Endothelial cell of umbilical vein (primary cell): ENCODE measurements at regions of chr3 and their contacts with region 1.

Region 1: DNA sequence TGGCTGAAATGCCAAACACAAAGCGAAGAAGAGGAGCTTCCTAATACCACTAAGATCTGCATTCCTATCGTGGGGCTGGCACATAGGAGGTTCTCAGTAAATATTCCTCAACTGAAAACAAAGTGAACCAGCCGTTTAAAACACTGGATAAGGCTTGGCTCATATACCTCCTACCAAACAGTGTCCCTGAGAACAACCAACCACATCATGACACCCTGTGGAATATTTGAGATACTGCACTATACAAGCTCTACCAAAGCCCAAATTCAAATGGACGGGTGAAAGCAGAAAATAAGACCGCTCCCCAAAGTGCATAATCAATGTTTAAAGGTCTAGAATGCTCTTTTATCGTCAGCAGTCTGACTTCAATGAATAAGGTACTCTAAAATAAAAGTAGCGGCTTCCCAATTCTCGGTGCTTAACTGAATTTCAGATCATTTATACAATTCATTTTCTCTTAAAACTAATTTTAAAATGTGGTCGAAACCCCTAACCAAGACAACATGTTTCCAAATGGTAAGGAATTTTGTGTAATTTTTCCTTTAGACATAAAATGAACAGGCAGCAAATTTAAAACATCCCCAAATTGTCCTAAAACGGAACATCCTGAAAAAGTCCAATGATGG is 425.8 kb downstream of the ERC2 start:
- DNase-seq: peak; percentile 44
- H3K4me3 ChIP-seq: no peak overlapping the region
- H3K27ac ChIP-seq: no peak overlapping the region
- H3K4me1 ChIP-seq: no peaks in the 10 kb centered on the region
- H3K27me3 ChIP-seq: no peaks in the 10 kb centered on the region
- CTCF ChIP-seq: peak in 1 of 2 donors; percentile 36
- POLR2A ChIP-seq: no peak

Region 2: GRCh38 chr3:55434789-55435188 is 607.6 kb before region 1 on chr3:
- CTCF ChIA-PET with region 1: no interaction called
- POLR2A ChIA-PET with region 1: no interaction called
- dilution Hi-C with region 1: no loop called
- intact Hi-C with region 1: loop called (anchors 2 kb)
- DNase-seq: no peak
- H3K4me3 ChIP-seq: no peak overlapping the region
- H3K27ac ChIP-seq: no peak overlapping the region
- H3K4me1 ChIP-seq: no peaks in the 10 kb centered on the region
- H3K27me3 ChIP-seq: no peaks in the 10 kb centered on the region
- CTCF ChIP-seq: peak; percentile 40 to 46
- POLR2A ChIP-seq: no peak

Region 3: DNA sequence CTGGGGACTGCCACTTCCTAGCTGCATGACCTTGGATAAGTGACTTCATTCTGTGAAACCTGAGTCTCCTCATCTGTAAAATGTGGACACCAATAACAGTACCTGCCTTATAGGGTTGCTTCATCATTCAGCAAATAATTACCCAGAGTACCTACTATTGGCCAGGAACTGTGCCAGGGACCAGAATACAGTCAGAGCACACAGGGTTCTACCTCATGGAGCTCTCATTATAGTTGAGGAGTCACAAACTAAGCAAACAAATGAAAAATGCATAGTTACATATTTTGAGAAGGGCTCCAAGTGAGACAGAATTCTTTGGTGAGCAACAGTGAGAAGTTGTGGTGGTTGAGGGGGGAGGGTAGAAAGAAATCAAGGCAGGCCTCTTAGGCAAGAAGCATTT is 246.7 kb before region 1 on chr3:
- CTCF ChIA-PET with region 1: no interaction called
- POLR2A ChIA-PET with region 1: no interaction called
- dilution Hi-C with region 1: no loop called
- intact Hi-C with region 1: loop called (anchors 10 kb)
- DNase-seq: no peak
- H3K4me3 ChIP-seq: no peak overlapping the region
- H3K27ac ChIP-seq: no peak overlapping the region
- H3K4me1 ChIP-seq: no peaks in the 10 kb centered on the region
- H3K27me3 ChIP-seq: no peaks in the 10 kb centered on the region
- CTCF ChIP-seq: no peak
- POLR2A ChIP-seq: no peak

Region 4: GRCh38 chr3:55936549-55937052 is 105.8 kb before region 1 on chr3:
- CTCF ChIA-PET with region 1: no interaction called
- POLR2A ChIA-PET with region 1: no interaction called
- dilution Hi-C with region 1: no loop called
- intact Hi-C with region 1: no loop called
- DNase-seq: no peak
- H3K4me3 ChIP-seq: no peak overlapping the region
- H3K27ac ChIP-seq: no peak overlapping the region
- H3K4me1 ChIP-seq: no peaks in the 10 kb centered on the region
- H3K27me3 ChIP-seq: no peaks in the 10 kb centered on the region
- CTCF ChIP-seq: no peak
- POLR2A ChIP-seq: no peak